PC-9 (cell line): ENCODE measurements at regions of chr4 and their contacts with region 1.

Region 1: DNA sequence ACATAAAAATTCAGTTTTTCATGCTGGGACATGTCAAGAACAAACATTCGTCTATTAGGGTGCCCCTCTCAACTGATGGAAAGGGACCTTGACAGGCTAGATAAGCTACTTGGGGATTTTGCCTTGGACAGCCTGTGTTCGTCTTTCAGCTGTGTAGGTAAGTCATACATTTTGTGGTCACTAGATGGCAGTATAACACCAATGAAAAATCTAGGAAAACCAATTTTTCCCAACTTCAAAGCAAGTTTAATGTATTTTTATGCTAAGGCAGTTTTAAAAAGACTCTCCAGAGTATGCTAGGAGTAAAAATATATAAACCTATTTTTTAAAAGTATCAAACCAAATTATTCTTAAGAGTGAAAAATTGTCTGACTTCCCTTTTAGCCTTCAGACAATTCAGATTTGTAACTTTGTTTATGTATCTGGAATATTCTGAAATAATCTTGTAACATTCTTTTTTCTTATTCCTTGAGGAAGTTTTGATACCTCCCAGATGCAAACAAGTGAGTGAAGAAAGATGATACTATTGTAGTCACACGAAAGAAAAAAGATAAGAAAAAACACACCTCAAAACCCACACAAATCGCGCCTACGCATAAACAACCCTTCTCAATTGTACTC is 158.3 kb downstream of the CPE start:
- DNase-seq: no peak
- H3K4me3 ChIP-seq: no peak overlapping the region
- H3K27ac ChIP-seq: no peak overlapping the region
- H3K4me1 ChIP-seq: no peaks in the 10 kb centered on the region
- H3K27me3 ChIP-seq: no peaks in the 10 kb centered on the region
- CTCF ChIP-seq: peak; percentile 74

Region 2: GRCh38 chr4:165476214-165477098 is 60.7 kb before region 1 on chr4:
- CTCF ChIA-PET with region 1: interaction called, 13 read pairs
- POLR2A ChIA-PET with region 1: no interaction called
- intact Hi-C with region 1: no loop called
- DNase-seq: peak; percentile 71 to 83
- H3K4me3 ChIP-seq: no peak overlapping the region
- H3K27ac ChIP-seq: peak overlapping the region; percentile 53
- H3K4me1 ChIP-seq: peaks cover 17% of the 10 kb centered on the region
- H3K27me3 ChIP-seq: no peaks in the 10 kb centered on the region
- CTCF ChIP-seq: no peak

Region 3: GRCh38 chr4:165493359-165493758 is 43.8 kb before region 1 on chr4:
- CTCF ChIA-PET with region 1: interaction called, 4 read pairs
- POLR2A ChIA-PET with region 1: interaction called, 4 read pairs
- intact Hi-C with region 1: loop called (anchors 2 kb)
- DNase-seq: peak in 1 of 2 experiments; percentile 70
- H3K4me3 ChIP-seq: no peak overlapping the region
- H3K27ac ChIP-seq: no peak overlapping the region
- H3K4me1 ChIP-seq: no peaks in the 10 kb centered on the region
- H3K27me3 ChIP-seq: no peaks in the 10 kb centered on the region
- CTCF ChIP-seq: peak; percentile 76

Region 4: DNA sequence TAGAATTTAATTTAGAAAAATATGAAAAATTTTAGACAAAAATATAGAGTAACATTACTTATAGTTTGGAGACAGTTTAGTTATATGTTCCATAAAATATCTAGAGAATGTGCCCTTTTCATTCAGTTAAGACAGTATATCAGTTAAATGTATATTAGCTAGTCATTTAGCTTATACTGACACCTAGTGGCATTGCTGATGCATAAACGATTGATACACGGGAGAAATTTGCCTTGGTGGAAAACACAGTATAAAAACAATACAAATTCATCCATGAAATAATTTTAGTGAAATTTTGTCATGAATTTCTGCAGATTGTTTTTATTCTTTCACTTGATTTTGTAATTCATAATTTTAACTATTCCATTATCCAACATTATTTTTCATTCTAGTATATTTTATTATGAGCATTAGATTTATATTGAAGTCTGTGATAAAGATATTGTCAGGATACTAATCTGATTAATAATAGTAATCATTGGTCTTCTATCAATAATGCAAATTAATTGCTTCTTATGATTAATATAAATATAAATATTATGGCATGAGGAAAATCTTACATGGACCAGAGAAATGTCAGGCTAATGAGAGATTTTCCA is 554.9 kb after region 1 on chr4:
- CTCF ChIA-PET with region 1: interaction called, 3 read pairs
- POLR2A ChIA-PET with region 1: no interaction called
- intact Hi-C with region 1: loop called (anchors 1 kb)
- DNase-seq: no peak
- H3K4me3 ChIP-seq: no peak overlapping the region
- H3K27ac ChIP-seq: no peak overlapping the region
- H3K4me1 ChIP-seq: no peaks in the 10 kb centered on the region
- H3K27me3 ChIP-seq: no peaks in the 10 kb centered on the region
- CTCF ChIP-seq: peak; percentile 73

Region 5: DNA sequence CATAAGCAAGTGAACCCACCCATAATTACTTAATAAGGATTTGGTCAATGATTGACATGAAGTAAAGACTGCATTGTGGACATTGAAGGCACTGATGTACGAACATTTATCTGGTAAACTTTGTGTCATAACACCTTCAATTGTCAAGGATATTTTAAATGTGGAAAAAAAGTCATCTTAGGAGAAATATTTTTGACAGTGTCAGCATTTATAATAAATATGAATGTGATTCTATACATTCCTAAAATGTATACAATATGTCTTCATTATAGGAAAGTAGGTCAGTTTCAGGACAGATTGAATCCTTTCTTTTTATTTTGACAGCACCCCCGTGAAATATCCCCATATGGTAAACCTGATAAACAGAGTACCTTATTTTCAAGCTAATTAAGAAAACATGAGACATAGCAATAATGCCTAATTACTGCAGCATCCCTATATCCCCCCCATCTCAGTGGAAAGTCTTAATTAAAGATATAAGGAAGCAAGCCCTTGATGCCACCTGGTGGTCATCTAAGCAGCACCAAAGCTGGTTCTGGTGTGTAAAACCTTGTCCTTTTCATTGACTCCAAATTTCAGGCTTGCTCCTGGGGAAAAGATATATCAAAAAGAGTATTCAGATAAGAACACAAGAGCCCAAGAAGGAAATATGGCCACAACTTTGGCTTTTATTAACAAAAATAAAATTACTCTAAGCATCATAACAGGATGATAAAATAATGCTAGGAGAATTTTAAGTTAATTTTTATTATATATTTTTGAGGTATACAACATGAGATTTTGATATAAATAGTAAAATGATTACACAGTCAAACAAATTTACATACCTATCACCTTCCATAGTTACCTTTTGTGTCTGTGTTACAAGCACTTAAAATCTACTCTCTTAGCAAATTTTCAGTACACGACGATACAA is 715.6 kb after region 1 on chr4:
- CTCF ChIA-PET with region 1: no interaction called
- POLR2A ChIA-PET with region 1: no interaction called
- intact Hi-C with region 1: loop called (anchors 10 kb)
- DNase-seq: no peak
- H3K4me3 ChIP-seq: no peak overlapping the region
- H3K27ac ChIP-seq: no peak overlapping the region
- H3K4me1 ChIP-seq: no peaks in the 10 kb centered on the region
- H3K27me3 ChIP-seq: no peaks in the 10 kb centered on the region
- CTCF ChIP-seq: peak; percentile 57

Region 6: GRCh38 chr4:166594326-166594946 is 1057.3 kb after region 1 on chr4:
- CTCF ChIA-PET with region 1: no interaction called
- POLR2A ChIA-PET with region 1: no interaction called
- intact Hi-C with region 1: loop called (anchors 1 kb)
- DNase-seq: peak in 1 of 2 experiments; percentile 43
- H3K4me3 ChIP-seq: no peak overlapping the region
- H3K27ac ChIP-seq: no peak overlapping the region
- H3K4me1 ChIP-seq: no peaks in the 10 kb centered on the region
- H3K27me3 ChIP-seq: no peaks in the 10 kb centered on the region
- CTCF ChIP-seq: peak; percentile 66